CD4-positive, alpha-beta memory T cell (primary cell): ENCODE measurements at regions of chr20 and their contacts with region 1.

Region 1: DNA sequence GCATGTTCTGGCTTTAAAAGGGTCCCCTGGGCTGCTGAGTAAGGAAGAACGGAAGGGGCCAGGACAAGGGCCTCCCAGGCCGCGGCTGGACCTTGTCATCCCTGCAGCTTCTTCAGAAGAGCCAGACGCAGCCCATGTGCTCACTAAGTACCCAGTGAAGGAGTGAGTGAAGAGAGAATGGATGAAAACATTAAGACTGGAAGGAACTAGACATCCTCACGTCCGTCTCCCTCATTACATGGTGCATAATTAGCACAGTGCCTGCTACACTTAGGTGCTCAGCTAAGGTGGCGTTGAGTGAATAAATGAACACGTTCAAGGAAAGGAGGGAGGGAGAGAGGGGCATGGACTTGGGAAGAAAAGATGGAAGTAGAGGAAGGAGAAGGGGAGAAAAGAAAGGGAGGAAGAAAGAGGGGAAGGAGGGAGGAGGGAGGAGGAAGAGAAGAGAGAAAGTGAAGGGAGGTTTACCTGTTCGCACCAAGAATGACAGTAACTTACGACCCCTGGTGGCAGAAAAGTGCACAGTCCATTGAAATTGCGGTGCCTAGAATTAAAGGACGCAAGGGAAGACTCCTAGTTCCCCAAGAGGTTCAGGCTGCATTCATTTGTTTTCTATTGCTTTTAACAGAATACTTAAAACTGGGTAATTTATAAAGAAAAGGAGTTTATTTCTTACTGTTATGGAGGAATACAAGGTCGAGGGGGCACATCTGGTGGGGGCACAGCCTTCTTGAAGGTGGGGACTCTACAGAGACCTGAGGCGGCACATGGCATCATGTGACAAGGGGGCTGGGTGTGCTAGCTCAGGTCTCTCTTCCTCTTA is 8.0 kb downstream of the TP53RK start:
- DNase-seq: peak; percentile 43 to 59 (median 54)
- H3K4me3 ChIP-seq: no peak overlapping the region
- H3K4me3 Mint-ChIP-seq: no peak overlapping the region
- H3K27ac ChIP-seq: no peak overlapping the region
- H3K27ac Mint-ChIP-seq: peak overlapping the region in 1 of 7 donors; percentile 42
- H3K4me1 ChIP-seq: peaks cover 21% of the 10 kb centered on the region
- H3K4me1 Mint-ChIP-seq: peaks cover 26 to 45% (median 35%) of the 10 kb centered on the region in 4 donors
- H3K27me3 ChIP-seq: no peaks in the 10 kb centered on the region
- H3K27me3 Mint-ChIP-seq: no peaks in the 10 kb centered on the region

Region 2: DNA sequence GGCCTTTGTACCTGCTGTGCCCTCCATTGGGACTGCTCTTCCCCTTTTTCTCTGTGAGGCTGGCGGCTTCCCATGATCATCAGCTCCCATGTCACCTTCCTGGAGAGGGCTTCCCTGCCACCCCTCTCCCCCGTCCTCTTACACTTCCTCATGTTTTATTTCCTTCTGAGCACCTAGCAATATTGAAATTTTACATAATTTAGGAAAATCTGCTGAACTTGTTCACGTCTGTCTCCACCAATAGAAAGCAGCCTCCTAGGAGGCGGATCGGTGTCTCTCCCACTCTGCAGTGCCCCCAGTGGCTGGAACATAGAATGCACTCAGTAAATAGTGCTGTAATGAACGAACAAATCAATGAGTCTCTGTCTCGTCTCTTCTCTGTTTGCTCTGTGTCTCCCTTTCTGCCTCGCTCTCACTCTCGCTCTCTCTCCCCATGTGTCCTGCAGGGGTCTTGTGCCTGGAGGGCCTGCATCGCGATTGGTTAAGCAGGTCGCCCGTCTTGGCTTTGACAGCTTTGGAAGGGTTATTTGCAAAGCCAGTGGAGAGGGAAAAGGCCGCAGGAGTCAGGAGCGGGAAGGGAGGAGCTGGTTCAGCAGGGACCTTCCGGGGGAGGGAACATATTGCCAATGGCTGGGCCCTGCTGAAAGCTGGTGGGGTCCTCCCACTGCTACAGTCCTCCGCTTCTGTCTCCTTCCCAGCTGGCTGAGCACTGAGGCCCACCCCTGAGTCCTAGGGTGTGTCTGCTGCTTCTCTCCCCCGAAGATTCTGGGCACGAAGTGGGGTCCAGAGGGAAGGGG is 118.7 kb before region 1 on chr20:
- CTCF ChIA-PET with region 1: no interaction called
- POLR2A ChIA-PET with region 1: no interaction called
- intact Hi-C with region 1: loop called (anchors 2 kb)
- DNase-seq: peak in 4 of 5 donors; percentile 26 to 45 (median 34)
- H3K4me3 ChIP-seq: no peak overlapping the region
- H3K4me3 Mint-ChIP-seq: no peak overlapping the region
- H3K27ac ChIP-seq: no peak overlapping the region
- H3K27ac Mint-ChIP-seq: no peak overlapping the region
- H3K4me1 ChIP-seq: no peaks in the 10 kb centered on the region
- H3K4me1 Mint-ChIP-seq: peaks cover 0 to 4% (median 2%) of the 10 kb centered on the region in 4 donors
- H3K27me3 ChIP-seq: no peaks in the 10 kb centered on the region
- H3K27me3 Mint-ChIP-seq: peaks cover 6 to 10% of the 10 kb centered on the region in 2 donors

Region 3: GRCh38 chr20:46695892-46696291 is 14.6 kb after region 1 on chr20:
- CTCF ChIA-PET with region 1: interaction called, 11 read pairs
- POLR2A ChIA-PET with region 1: no interaction called
- intact Hi-C with region 1: no loop called
- DNase-seq: no peak
- H3K4me3 ChIP-seq: no peak overlapping the region
- H3K4me3 Mint-ChIP-seq: no peak overlapping the region
- H3K27ac ChIP-seq: no peak overlapping the region
- H3K27ac Mint-ChIP-seq: no peak overlapping the region
- H3K4me1 ChIP-seq: no peaks in the 10 kb centered on the region
- H3K4me1 Mint-ChIP-seq: peaks cover 0 to 7% (median 4%) of the 10 kb centered on the region in 4 donors
- H3K27me3 ChIP-seq: no peaks in the 10 kb centered on the region
- H3K27me3 Mint-ChIP-seq: peaks cover 12 to 27% of the 10 kb centered on the region in 2 donors

Region 4: GRCh38 chr20:46717818-46718541 is 36.7 kb after region 1 on chr20:
- CTCF ChIA-PET with region 1: no interaction called
- POLR2A ChIA-PET with region 1: no interaction called
- intact Hi-C with region 1: no loop called
- DNase-seq: no peak
- H3K4me3 ChIP-seq: no peak overlapping the region
- H3K4me3 Mint-ChIP-seq: no peak overlapping the region
- H3K27ac ChIP-seq: no peak overlapping the region
- H3K27ac Mint-ChIP-seq: no peak overlapping the region
- H3K4me1 ChIP-seq: no peaks in the 10 kb centered on the region
- H3K4me1 Mint-ChIP-seq: no peaks in the 10 kb centered on the region
- H3K27me3 ChIP-seq: no peaks in the 10 kb centered on the region
- H3K27me3 Mint-ChIP-seq: peaks cover 17 to 28% of the 10 kb centered on the region in 2 donors